ENCODE measurements at regions of chr10 and their contacts with region 1.

Region 1: GRCh38 chr10:94172332-94172731 is 178.6 kb downstream of the PLCE1 start:
- DNase-seq: no peak
- ATAC-seq: no peak
- H3K4me3 ChIP-seq: no peak overlapping the region
- H3K27ac ChIP-seq: no peak overlapping the region
- H3K4me1 ChIP-seq: no peaks in the 10 kb centered on the region
- CTCF ChIP-seq: no peak
- EP300 ChIP-seq: no peak
- POLR2A ChIP-seq: no peak
- RAD21 ChIP-seq: no peak

Region 2: DNA sequence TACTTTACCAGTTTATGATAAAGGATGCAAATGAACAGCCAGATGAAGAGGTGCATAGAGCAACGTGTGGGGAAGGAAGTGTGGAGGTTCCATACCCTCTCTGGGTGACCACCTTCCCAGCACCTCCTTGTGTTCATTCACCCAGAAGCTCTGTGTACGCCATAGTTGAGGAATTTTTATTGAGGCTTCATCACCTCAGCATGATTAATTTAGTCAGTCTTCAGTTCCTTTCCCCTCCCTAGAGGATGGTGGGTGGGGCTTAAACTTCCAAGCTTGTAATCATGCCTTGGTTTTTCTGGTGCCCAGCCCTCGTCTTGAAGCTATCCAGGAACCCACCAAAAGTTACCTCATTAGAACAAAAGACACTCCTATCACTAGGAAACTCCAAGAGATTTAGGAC is 15.9 kb before region 1 on chr10:
- CTCF ChIA-PET with region 1: interaction called, 10 read pairs
- POLR2A ChIA-PET with region 1: no interaction called
- DNase-seq: no peak
- ATAC-seq: no peak
- H3K4me3 ChIP-seq: no peak overlapping the region
- H3K27ac ChIP-seq: no peak overlapping the region
- H3K4me1 ChIP-seq: no peaks in the 10 kb centered on the region
- CTCF ChIP-seq: no peak
- EP300 ChIP-seq: no peak
- POLR2A ChIP-seq: no peak
- RAD21 ChIP-seq: no peak